Activated CD4-positive, alpha-beta memory T cell treated with anti-CD3 and anti-CD28 coated beads for 36 hours (primary cell): ENCODE measurements at regions of chr4 and their contacts with region 1.

Region 1: GRCh38 chr4:173168396-173169177 is at the start of gene GALNT7:
- DNase-seq: peak; percentile 79
- H3K4me3 Mint-ChIP-seq: peak within 1 kb of the TSS; percentile 91
- H3K27ac Mint-ChIP-seq: peak within 1 kb of the TSS; percentile 84
- H3K4me1 Mint-ChIP-seq: peaks cover 39% of the 10 kb centered on the region
- H3K27me3 Mint-ChIP-seq: no peaks in the 10 kb centered on the region
- total RNA-seq, gene GALNT7: 14.4 to 16.0 TPM

Region 2: GRCh38 chr4:173192375-173193162 is 24.0 kb after region 1 on chr4:
- CTCF ChIA-PET with region 1: interaction called, 4 read pairs
- POLR2A ChIA-PET with region 1: no interaction called
- intact Hi-C with region 1: loop called (anchors 1 kb)
- DNase-seq: no peak
- H3K4me3 Mint-ChIP-seq: no peak overlapping the region
- H3K27ac Mint-ChIP-seq: no peak overlapping the region
- H3K4me1 Mint-ChIP-seq: peaks cover 44% of the 10 kb centered on the region
- H3K27me3 Mint-ChIP-seq: no peaks in the 10 kb centered on the region

Region 3: DNA sequence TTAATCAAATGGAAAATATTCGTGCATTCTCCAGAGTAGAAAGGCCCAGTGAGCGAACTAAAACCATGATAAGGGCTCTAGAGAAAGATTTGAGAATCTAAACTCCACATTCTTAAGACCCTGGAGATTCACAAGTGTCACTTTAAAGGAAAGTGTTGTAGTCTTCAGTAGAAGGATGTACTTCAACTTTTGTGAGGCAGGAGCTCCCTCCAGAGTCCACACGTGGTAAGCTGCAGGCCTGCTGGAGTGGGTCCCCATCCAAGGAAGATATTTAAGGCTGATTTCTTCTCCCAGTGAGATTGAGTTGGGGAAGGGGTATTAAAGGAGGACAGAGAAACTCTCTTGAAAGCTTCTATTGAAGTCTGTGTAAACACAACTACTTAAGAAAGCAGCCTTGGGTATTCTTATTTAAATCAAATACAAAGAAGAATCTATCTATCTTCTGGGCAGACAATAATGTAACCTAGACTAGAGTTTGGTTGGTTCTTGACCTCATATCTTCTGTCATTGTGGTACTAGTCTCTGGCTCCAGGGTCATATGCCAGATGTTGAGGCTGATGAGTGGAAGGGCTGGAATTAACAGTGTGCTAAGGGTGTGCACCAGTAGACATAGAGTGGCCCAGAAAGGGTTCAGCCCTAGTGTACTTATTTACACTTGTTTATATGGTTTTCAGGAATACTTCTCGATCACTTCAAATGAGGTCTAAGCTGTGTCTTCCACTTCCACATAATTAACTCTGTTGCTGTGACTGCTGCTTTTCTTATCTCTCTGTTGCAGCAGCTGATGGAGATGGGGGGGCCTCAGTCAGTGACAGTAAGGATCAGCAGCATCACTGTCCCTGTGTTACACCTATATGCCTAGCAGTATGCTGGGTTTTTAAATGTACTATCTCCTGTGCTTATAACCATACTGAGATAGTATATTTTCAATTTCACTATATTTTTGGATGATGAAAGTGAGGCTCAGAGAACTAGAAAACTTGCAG is 89.4 kb after region 1 on chr4:
- CTCF ChIA-PET with region 1: interaction called, 7 read pairs
- POLR2A ChIA-PET with region 1: no interaction called
- intact Hi-C with region 1: loop called (anchors 10 kb)
- DNase-seq: peak; percentile 73
- H3K4me3 Mint-ChIP-seq: no peak overlapping the region
- H3K27ac Mint-ChIP-seq: no peak overlapping the region
- H3K4me1 Mint-ChIP-seq: peaks cover 4% of the 10 kb centered on the region
- H3K27me3 Mint-ChIP-seq: no peaks in the 10 kb centered on the region

Region 4: DNA sequence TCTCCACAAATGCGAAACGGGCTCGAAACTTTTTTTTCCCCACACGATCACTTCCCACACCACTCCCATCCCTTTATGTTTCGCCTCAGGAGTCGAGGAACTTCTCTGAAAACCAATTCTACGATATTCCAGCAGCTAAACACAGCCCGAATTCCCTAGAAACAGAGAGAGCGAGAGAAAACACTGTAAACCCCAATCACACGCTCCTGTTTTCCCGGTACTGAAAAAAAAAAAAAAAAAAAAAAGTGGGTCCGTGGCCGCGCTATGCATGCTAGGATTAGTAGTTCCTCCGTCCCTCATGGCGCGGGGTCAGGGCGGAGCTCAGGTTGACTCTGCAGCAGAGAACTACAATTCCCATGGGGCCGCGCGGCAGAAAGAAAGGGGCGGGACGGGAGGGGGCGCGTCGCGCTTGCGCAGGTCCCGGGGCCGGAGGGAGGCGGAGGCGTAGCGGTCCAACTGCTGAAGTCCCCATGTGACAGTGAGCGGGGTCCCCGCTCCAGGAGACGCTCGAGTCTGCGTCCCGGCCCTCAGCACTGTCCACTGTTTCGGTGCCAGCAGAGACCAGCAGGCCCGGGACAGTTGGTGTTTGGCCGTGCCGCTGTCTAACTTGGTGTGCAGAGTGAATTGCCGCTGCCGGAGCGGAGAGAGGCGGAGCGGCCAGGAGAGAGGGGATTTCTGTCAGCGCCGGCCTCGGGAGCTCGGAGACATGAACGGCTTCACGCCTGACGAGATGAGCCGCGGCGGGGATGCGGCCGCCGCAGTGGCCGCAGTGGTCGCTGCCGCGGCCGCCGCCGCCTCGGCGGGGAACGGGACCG is 202.1 kb after region 1 on chr4 and contains the start of gene SAP30:
- CTCF ChIA-PET with region 1: no interaction called
- POLR2A ChIA-PET with region 1: interaction called, 5 read pairs
- intact Hi-C with region 1: loop called (anchors 1 kb)
- DNase-seq: peak; percentile 99
- H3K4me3 Mint-ChIP-seq: peak within 1 kb of the TSS; percentile 100
- H3K27ac Mint-ChIP-seq: peak within 1 kb of the TSS; percentile 99
- H3K4me1 Mint-ChIP-seq: peaks cover 33% of the 10 kb centered on the region
- H3K27me3 Mint-ChIP-seq: peaks cover 4% of the 10 kb centered on the region
- total RNA-seq, gene SAP30: 26.1 to 26.5 TPM

Region 5: GRCh38 chr4:174023641-174024040 is 855.1 kb after region 1 on chr4:
- CTCF ChIA-PET with region 1: no interaction called
- POLR2A ChIA-PET with region 1: no interaction called
- intact Hi-C with region 1: no loop called
- DNase-seq: no peak
- H3K4me3 Mint-ChIP-seq: no peak overlapping the region
- H3K27ac Mint-ChIP-seq: no peak overlapping the region
- H3K4me1 Mint-ChIP-seq: no peaks in the 10 kb centered on the region
- H3K27me3 Mint-ChIP-seq: no peaks in the 10 kb centered on the region

Region 6: DNA sequence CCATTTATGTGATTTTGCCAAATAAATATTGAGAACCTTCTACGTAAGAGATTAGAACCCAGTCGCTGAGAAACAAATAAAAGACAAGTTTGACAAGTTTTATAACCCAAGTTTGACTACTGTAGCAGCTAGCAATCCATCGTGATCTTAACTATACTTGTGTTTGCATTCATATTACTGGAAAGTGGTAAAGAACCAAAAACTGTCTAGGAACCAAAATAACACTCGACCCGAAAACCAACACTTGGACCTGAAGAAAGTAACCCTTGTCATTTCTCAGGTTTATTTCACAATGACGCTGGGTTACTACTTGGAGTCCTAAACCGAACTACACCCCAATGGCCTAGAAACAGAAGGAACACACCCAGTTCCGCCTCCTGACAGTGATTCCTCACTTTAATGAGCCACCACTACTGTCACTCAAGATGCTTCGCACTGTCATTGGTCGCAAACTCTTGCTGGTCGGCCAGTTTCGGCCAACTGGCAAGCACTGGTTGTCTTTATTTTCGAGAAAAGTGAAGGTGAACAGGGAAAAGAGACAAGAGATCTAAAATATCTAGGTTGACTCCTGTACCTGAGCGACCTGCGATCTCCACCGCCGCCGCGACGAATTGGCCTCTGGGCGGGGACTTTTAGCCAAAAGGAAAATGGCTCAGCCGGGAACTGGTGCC is 1114.4 kb after region 1 on chr4:
- CTCF ChIA-PET with region 1: no interaction called
- POLR2A ChIA-PET with region 1: no interaction called
- intact Hi-C with region 1: loop called (anchors 2 kb)
- DNase-seq: peak; percentile 86
- H3K4me3 Mint-ChIP-seq: peak overlapping the region; percentile 97
- H3K27ac Mint-ChIP-seq: peak overlapping the region; percentile 99
- H3K4me1 Mint-ChIP-seq: peaks cover 62% of the 10 kb centered on the region
- H3K27me3 Mint-ChIP-seq: no peaks in the 10 kb centered on the region